Motor neuron (in vitro differentiated cells): ENCODE measurements at regions of chr1 and their contacts with region 1.

Region 1: DNA sequence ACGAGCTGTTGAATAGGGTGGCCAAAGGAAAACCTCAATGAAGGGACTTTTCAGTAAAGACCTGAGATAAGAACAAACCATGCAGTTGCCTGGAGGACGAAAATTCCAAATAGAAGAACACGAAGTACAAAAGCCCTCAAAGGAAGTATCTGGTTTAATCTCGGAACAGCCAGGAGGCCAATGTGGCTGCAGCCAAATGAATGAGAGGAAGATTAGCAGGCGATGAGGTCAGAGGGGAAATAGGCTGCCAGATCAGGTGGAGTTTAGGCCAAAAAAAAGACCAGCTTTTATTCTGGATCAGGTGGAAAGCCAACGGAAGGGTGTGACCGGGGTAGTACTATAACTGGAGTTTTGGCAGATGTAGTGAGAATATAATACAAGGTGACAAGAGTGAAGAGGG is 43.7 kb downstream of the SRSF11 start:
- ATAC-seq: no peak
- H3K4me3 ChIP-seq: no peak overlapping the region
- H3K27ac ChIP-seq: no peak overlapping the region
- H3K4me1 ChIP-seq: no peaks in the 10 kb centered on the region

Region 2: DNA sequence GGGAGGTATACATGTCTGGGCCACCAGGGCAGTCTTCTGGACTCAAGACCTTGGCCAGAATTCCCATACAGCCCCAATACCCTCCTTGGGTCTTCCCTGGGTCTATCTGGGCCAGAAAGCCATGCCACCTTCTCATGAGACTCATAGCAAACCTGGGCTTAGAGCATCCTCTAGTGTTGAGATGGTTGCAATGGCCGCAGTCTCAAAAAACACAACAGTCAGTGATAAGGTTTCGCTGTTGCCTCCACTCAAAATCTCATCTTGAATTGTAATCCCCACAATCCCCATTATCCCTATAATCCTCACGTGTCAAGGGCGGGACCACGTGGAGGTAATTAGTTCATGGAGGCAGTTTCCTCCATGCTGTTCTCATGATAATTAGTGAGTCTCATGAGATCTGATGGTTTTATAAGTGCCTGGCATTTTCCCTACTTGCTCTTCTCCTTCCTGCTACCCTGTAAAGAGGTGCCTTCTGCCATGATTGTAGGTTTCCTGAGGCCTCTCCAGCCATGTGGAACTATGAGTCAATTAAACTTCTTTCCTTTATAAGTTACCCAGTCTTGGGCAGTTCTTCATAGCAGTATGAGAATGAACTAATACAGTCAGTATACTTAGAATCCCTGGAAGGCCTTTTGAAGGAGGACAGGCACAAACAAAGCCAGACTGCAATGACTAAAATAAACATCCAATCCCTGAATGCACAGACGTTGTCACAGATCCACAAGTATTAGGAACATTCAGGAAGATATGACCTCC is 223.2 kb after region 1 on chr1:
- in situ Hi-C with region 1: loop called in 1 of 9 experiments (anchors 25 kb)
- ATAC-seq: peak in 4 of 8 experiments; percentile 52 to 85 (median 68)
- H3K4me3 ChIP-seq: no peak overlapping the region
- H3K27ac ChIP-seq: no peak overlapping the region
- H3K4me1 ChIP-seq: no peaks in the 10 kb centered on the region